Spleen (tissue), 13 donors: ENCODE measurements at regions of chr17 and their contacts with region 1.

Region 1: GRCh38 chr17:64975329-64976087 is 56.2 kb upstream of the LRRC37A3 start:
- DNase-seq: peak; percentile 99
- H3K4me3 ChIP-seq: peak overlapping the region; percentile 48 to 78 (median 59)
- H3K27ac ChIP-seq: peak overlapping the region; percentile 94 to 100 (median 99)
- H3K4me1 ChIP-seq: peaks cover 15 to 41% (median 28%) of the 10 kb centered on the region in 6 donors
- H3K27me3 ChIP-seq: no peaks in the 10 kb centered on the region
- CTCF ChIP-seq: peak in 3 of 11 experiments; percentile 3 to 50 (median 16)
- POLR2A ChIP-seq: peak; percentile 63 to 92 (median 91)

Region 2: GRCh38 chr17:65055348-65056261 is 80.1 kb after region 1 on chr17:
- intact Hi-C with region 1: loop called (anchors 5 kb)
- DNase-seq: peak; percentile 94
- H3K4me3 ChIP-seq: peak overlapping the region; percentile 59 to 93 (median 83)
- H3K27ac ChIP-seq: peak overlapping the region; percentile 91 to 100 (median 98)
- H3K4me1 ChIP-seq: peaks cover 40 to 87% (median 68%) of the 10 kb centered on the region in 6 donors
- H3K27me3 ChIP-seq: no peaks in the 10 kb centered on the region
- CTCF ChIP-seq: no peak
- POLR2A ChIP-seq: peak in 2 of 3 donors; percentile 26 to 61

Region 3: GRCh38 chr17:65100316-65101140 is 125.0 kb after region 1 on chr17:
- intact Hi-C with region 1: loop called (anchors 10 kb)
- DNase-seq: peak; percentile 97
- H3K4me3 ChIP-seq: peak overlapping the region; percentile 24 to 75 (median 45)
- H3K27ac ChIP-seq: peak overlapping the region; percentile 30 to 88 (median 82)
- H3K4me1 ChIP-seq: peaks cover 3 to 34% (median 19%) of the 10 kb centered on the region in 6 donors
- H3K27me3 ChIP-seq: no peaks in the 10 kb centered on the region
- CTCF ChIP-seq: peak; percentile 93 to 99 (median 98)
- POLR2A ChIP-seq: no peak